Upper lobe of right lung (tissue), 1 donor: ENCODE measurements at regions of chr2 and their contacts with region 1.

Region 1: GRCh38 chr2:219029829-219030165 is 11.5 kb downstream of the CFAP65 start:
- DNase-seq: peak; percentile 89
- ATAC-seq: peak; percentile 94
- H3K4me3 ChIP-seq: no peak overlapping the region
- H3K27ac ChIP-seq: no peak overlapping the region
- H3K4me1 ChIP-seq: no peaks in the 10 kb centered on the region
- H3K27me3 ChIP-seq: peaks cover 33% of the 10 kb centered on the region
- CTCF ChIP-seq: peak; percentile 99

Region 2: DNA sequence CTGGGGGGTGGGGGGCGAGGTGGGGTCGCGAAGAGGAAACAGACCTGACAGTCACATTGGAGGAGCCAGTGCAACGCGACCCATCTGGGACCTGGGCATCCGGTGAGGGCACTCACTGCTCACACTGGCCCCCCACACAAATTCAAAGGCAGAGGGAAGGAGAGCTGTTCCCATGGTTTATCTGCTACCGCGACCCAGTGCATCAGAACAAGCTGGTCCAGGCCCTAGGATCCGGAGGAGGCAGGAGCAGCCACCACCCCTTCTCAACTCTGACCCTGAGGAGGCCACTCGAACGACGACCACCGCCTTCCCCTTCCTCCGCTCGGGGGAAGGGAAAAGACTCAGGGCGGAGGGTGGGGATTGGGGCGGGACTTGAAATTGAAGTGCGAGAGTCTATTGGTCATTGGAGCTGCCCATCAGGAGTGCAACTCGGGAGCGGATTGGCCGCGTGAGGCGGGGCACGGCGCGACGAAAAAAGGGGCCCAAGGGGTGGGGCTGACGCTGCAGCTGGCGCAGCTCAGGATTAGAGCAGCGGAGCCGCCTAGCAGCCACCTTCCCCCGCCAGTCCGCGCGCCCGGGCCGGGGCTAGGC is 70.6 kb before region 1 on chr2 and contains the start of gene CDK5R2:
- intact Hi-C with region 1: no loop called
- DNase-seq: peak; percentile 79
- ATAC-seq: peak; percentile 67
- H3K4me3 ChIP-seq: peak within 1 kb of the TSS; percentile 23
- H3K27ac ChIP-seq: no peak within 1 kb of the TSS
- H3K4me1 ChIP-seq: peaks cover 3% of the 10 kb centered on the region
- H3K27me3 ChIP-seq: peaks cover 73% of the 10 kb centered on the region
- CTCF ChIP-seq: no peak
- total RNA-seq, gene CDK5R2: not detected

Region 3: DNA sequence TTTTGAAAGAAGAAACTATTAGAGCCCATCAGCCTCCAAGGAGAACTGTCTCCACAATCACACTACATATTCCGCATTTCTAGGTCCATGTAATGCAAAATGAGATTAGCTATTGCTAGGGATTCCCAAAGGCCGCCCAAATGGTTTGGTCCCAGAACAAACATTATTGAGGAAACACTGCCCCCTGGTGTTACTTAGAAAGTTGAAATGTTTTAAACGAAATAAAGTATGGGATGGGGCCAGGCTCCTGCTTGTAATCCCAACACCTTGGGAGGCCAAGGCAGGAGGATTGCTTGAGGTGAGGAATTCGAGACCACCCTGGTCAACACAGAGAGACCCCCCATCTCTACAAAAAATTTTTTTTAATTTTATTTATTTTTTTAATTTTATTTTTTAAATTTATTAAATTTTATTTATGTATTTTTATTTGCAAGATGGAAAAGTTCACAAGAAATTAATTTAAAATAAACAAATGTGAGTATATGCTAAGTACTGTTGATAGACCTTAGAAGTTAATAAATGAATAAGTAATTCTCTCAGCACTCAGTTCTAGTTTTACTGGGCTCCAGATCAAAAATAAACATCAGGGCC is 125.4 kb after region 1 on chr2:
- intact Hi-C with region 1: loop called (anchors 10 kb)
- DNase-seq: no peak
- ATAC-seq: peak; percentile 88
- H3K4me3 ChIP-seq: no peak overlapping the region
- H3K27ac ChIP-seq: no peak overlapping the region
- H3K4me1 ChIP-seq: peaks cover 7% of the 10 kb centered on the region
- H3K27me3 ChIP-seq: no peaks in the 10 kb centered on the region
- CTCF ChIP-seq: peak; percentile 66